Adrenal gland (tissue), 19 donors: ENCODE measurements at regions of chr20 and their contacts with region 1.

Region 1: GRCh38 chr20:40990542-40991120 is 38.0 kb upstream of the TOP1 start:
- DNase-seq: peak; percentile 84 to 95 (median 90)
- H3K4me3 ChIP-seq: no peak overlapping the region
- H3K27ac ChIP-seq: peak overlapping the region in 1 of 5 donors; percentile 1
- H3K4me1 ChIP-seq: peaks cover 0 to 11% of the 10 kb centered on the region in 2 donors
- H3K27me3 ChIP-seq: no peaks in the 10 kb centered on the region
- CTCF ChIP-seq: peak; percentile 61 to 95 (median 90)
- POLR2A ChIP-seq: no peak

Region 2: GRCh38 chr20:41057999-41058896 is 67.6 kb after region 1 on chr20:
- intact Hi-C with region 1: no loop called
- DNase-seq: no peak
- H3K4me3 ChIP-seq: no peak overlapping the region
- H3K27ac ChIP-seq: peak overlapping the region in 2 of 5 donors; percentile 14 to 44
- H3K4me1 ChIP-seq: peaks cover 28 to 43% of the 10 kb centered on the region in 2 donors
- H3K27me3 ChIP-seq: no peaks in the 10 kb centered on the region
- CTCF ChIP-seq: no peak
- POLR2A ChIP-seq: no peak

Region 3: DNA sequence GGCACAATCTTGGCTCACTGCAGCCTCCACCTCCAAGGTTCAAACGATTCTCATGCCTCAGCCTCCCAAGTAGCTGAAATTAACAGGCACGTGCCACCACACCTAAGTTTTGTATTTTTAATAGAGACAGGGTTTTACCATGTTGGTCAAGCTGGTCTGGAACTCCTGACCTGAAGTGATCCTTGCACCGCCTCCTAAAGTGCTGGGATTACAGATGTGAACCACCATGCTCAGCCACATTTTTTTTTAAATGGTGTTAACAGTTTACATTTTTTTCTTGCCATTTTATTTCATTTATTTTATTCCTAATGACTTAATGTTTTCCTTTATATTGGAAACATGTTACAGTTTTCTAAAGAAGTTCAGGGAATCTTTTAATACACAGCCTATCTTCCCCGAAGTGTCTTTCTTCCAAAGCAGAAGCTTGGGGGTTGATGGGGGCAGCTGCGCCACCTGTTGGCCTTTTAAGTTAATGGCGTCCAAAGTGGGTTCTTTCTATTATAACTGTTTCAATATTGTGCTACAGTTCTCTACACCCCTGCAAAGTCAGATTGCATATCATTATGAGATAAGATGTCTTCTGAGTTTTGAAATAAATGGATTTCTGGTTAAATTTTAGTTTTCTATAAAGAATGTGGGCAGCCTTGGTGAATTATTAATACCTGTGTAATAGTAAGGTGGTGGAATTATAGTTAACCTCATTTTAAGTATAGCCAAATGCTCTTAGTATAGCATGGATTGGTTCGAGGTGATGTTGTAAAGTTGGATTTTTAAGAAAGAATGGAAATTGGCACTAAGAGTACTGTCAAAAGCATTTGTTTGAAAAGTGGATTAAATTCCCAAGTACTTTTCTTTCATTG is 104.7 kb after region 1 on chr20:
- intact Hi-C with region 1: loop called (anchors 5 to 10 kb)
- DNase-seq: peak; percentile 33 to 86 (median 68)
- H3K4me3 ChIP-seq: no peak overlapping the region
- H3K27ac ChIP-seq: no peak overlapping the region
- H3K4me1 ChIP-seq: peaks cover 0 to 20% of the 10 kb centered on the region in 2 donors
- H3K27me3 ChIP-seq: no peaks in the 10 kb centered on the region
- CTCF ChIP-seq: peak; percentile 77 to 85 (median 83)
- POLR2A ChIP-seq: no peak